Activated CD4-positive, alpha-beta T cell treated with anti-CD3 and anti-CD28 coated beads for 36 hours (primary cell): ENCODE measurements at regions of chr1 and their contacts with region 1.

Region 1: DNA sequence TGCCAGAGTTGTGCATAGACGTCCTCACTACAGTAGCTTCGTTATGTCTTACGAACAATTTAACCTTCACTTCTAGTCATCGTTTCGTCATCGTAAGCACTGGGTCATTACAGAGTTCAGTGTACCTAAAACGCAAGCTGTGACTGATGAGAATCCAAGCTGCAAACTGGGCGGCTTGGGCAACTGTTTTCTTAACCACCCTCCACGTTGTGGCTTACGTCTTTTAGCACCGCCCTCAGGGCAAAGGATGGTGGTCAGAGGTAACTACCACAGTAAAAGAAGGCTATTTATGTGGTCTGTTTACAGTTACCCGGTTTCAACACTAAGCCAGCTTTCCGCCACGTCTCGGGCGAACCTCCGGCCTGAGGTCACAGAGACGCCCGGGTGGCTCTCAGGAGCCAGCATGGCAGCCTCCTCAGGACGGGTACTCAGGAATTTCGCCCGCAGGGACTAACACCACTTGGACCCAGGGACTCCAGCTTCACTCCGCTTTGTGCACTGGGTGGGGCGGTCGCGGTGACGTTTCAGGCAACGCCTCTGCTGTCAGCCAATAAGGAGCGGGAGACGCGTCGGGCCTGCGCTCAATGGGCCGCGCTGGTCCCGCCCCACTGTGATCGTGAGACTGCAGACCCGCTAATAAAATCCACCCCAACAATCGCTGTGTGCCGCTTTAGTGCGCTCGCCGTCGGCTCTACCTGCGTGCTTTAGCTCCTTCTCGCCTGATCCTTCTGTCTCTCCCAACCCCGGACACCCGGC is at the start of gene CTH:
- DNase-seq: peak; percentile 96
- ATAC-seq: peak; percentile 95
- H3K4me3 Mint-ChIP-seq: peak within 1 kb of the TSS; percentile 90
- H3K27ac Mint-ChIP-seq: peak within 1 kb of the TSS; percentile 83
- H3K4me1 Mint-ChIP-seq: peaks cover 13% of the 10 kb centered on the region
- H3K27me3 Mint-ChIP-seq: no peaks in the 10 kb centered on the region
- total RNA-seq, gene CTH: 25.3 to 29.8 TPM

Region 2: GRCh38 chr1:70205434-70206118 is 205.2 kb before region 1 on chr1 and contains the start of gene LRRC40:
- CTCF ChIA-PET with region 1: no interaction called
- POLR2A ChIA-PET with region 1: interaction called, 4 read pairs
- intact Hi-C with region 1: loop called (anchors 1 kb)
- DNase-seq: peak; percentile 97
- ATAC-seq: peak; percentile 89
- H3K4me3 Mint-ChIP-seq: peak within 1 kb of the TSS; percentile 99
- H3K27ac Mint-ChIP-seq: peak within 1 kb of the TSS; percentile 99
- H3K4me1 Mint-ChIP-seq: peaks cover 66% of the 10 kb centered on the region
- H3K27me3 Mint-ChIP-seq: no peaks in the 10 kb centered on the region
- total RNA-seq, gene LRRC40: 23.2 to 26.4 TPM

Region 3: GRCh38 chr1:70372426-70372825 is 38.4 kb before region 1 on chr1:
- CTCF ChIA-PET with region 1: no interaction called
- POLR2A ChIA-PET with region 1: no interaction called
- intact Hi-C with region 1: no loop called
- DNase-seq: no peak
- ATAC-seq: no peak
- H3K4me3 Mint-ChIP-seq: no peak overlapping the region
- H3K27ac Mint-ChIP-seq: no peak overlapping the region
- H3K4me1 Mint-ChIP-seq: no peaks in the 10 kb centered on the region
- H3K27me3 Mint-ChIP-seq: no peaks in the 10 kb centered on the region